Left colon (tissue), 2 donors: ENCODE measurements at regions of chr16 and their contacts with region 1.

Region 1: DNA sequence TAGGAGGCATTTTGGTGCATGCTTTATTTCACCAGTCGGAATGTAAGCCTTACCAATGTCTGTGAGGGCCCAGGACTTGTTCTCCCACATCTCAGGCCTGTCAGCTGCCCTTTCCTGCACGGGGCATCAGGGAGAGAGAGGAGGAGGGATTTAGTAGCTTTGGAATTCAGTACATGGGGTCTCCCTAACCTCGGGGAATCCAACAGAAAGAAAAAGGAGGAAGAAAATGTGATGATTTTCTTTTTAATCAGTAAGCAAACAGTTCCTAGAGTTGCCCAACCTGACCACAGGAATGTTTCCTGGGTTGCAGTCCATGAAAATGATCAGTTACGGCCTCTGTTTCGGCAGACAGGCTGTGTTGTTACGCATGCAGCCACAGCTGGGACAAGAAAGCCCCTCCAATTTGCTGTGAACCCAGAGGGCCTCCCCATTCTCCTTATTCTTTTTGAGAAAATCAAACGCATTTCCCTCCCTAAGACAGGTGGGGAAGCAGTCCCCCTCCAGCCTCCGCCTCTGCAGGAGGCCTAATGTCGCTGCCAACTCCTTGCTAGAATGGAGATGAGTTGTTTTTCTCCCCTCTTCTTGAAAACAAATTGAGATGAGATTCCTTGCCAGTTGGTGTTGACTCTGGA is 53.1 kb upstream of the TANGO6 start:
- DNase-seq: peak in 1 of 2 donors; percentile 33
- ATAC-seq: no peak

Region 2: DNA sequence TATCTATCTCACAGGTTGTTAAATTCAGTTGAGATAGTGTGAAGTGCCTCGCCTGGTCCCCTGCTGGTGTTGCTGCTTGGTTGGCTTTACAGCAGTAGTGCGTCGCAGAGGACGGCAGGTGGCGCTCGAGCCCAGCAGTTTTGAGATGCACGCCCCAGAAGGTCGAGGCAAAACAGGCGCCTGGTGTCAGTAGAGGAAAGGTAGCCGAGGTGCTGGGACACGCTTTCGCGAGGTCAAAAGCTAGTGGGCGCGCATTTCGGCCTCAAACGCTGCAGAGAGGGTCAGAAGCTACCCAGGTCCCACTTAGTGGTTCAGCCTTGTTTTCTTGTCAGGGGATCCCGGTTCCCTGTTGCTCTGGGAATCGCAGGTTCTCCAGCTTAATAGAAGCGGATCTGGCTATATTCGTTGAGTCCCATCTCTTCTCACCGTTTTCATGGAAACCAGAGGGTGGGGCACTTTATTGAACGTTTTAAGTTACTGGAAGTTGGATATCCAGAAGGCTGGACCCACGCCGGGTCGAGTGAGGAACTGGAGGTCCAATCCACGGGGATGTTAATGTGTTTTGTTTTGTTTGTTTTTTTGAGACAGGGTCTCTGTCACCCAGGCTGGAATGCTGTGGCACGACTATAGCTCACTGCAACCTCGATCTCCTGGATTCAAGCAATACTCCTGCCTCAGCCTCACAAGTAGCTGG is 261.4 kb before region 1 on chr16:
- intact Hi-C with region 1: loop called (anchors 10 kb)
- DNase-seq: peak; percentile 81 to 87
- ATAC-seq: peak; percentile 84

Region 3: DNA sequence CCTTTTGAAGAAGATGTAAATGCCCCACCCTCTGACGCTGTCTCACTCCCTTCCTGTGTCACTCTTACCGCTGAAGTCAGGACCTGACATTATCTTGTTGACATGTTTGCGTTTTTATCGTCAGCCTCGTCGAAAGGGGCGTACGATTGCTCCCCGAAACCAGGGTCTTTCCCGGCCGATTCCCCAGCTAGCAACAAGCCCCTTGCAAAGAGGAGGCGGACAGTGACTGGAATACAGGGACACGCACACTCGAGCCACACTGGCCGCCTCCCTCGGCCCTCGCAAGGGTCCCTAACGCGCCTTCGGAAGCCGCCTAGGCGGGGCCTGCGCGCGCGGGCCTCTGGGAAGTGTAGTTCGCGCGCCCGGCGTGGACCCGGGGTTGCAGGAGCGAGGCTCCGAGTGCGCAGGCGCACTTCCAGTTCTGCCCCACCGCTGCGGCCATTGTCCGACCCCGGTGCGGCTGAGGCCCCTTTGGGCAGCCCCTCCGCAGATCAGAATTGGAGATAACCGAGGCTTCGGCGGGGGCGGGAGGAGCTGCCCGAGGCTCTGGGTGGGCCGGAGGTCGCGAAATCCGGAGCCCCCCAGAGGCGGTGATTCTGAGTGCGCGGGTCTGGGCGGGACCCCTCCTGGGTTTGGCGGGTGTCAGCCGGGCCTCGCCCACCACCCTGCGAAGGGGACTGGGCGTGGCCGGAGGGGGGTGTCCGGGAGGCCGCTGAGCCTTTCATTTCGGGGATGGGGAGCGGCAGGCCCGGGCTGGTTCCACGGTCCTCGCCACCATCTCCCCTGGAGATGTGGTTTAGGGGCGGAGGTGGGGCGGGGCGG is 251.2 kb before region 1 on chr16 and contains the start of gene ZFP90:
- intact Hi-C with region 1: loop called in 1 of 2 experiments (anchors 10 kb)
- DNase-seq: peak; percentile 82 to 93
- ATAC-seq: peak; percentile 99
- total RNA-seq, gene ZFP90: 8.4 to 9.0 TPM

Region 4: GRCh38 chr16:68704232-68704867 is 85.9 kb before region 1 on chr16:
- intact Hi-C with region 1: loop called in 1 of 2 experiments (anchors 10 kb)
- DNase-seq: peak; percentile 89 to 90
- ATAC-seq: peak; percentile 84

Region 5: GRCh38 chr16:69049146-69049545 is 258.9 kb after region 1 on chr16:
- intact Hi-C with region 1: no loop called
- DNase-seq: no peak
- ATAC-seq: no peak